K562 (cell line): ENCODE measurements at regions of chr9 and their contacts with region 1.

Region 1: GRCh38 chr9:69745716-69746437 is 13.9 kb downstream of the PTAR1 start:
- DNase-seq: peak in 2 of 4 experiments; percentile 9
- ATAC-seq: peak; percentile 76
- H3K4me3 ChIP-seq: no peak overlapping the region
- H3K27ac ChIP-seq: peak overlapping the region; percentile 45; the same call in 2 of the 3 replicates
- H3K4me1 ChIP-seq: peaks cover 0 to 7% of the 10 kb centered on the region in 2 experiments; a peak in 2 of 5 replicates
- H3K27me3 ChIP-seq: no peaks in the 10 kb centered on the region
- CTCF ChIP-seq: peak in 2 of 3 experiments; percentile 16 to 37; a peak in 3 of 6 replicates
- EP300 ChIP-seq: no peak
- POLR2A ChIP-seq: no peak
- RAD21 ChIP-seq: peak in 1 of 2 experiments; percentile 30; a peak in 1 of 4 replicates

Region 2: DNA sequence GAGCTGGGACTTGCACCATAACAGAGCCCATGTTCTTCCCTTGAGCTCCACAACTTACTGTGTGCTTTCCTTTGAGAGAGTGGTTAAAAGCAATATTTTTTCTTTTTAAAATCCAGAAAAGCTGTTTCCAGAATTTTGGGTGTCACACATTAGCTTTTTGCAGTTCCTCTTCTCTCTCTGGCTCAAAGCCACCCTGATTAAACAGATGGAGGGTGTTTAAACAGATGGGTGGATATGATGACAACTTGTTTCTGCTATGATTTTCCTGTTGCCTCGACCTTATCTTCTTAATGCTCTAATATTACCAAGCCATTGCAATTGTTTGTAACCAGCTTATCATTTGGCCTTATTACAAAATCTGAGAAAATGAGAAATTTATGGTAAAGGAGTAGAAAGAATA is 51.8 kb after region 1 on chr9:
- CTCF ChIA-PET with region 1: no interaction called
- POLR2A ChIA-PET with region 1: no interaction called
- in situ Hi-C with region 1: no loop called
- intact Hi-C with region 1: no loop called
- DNase-seq: peak in 1 of 4 experiments; percentile 10
- ATAC-seq: no peak
- H3K4me3 ChIP-seq: no peak overlapping the region
- H3K27ac ChIP-seq: no peak overlapping the region
- H3K4me1 ChIP-seq: peaks cover 0 to 3% of the 10 kb centered on the region in 2 experiments; a peak in 2 of 5 replicates
- H3K27me3 ChIP-seq: no peaks in the 10 kb centered on the region
- CTCF ChIP-seq: no peak
- EP300 ChIP-seq: no peak
- POLR2A ChIP-seq: no peak
- RAD21 ChIP-seq: no peak

Region 3: DNA sequence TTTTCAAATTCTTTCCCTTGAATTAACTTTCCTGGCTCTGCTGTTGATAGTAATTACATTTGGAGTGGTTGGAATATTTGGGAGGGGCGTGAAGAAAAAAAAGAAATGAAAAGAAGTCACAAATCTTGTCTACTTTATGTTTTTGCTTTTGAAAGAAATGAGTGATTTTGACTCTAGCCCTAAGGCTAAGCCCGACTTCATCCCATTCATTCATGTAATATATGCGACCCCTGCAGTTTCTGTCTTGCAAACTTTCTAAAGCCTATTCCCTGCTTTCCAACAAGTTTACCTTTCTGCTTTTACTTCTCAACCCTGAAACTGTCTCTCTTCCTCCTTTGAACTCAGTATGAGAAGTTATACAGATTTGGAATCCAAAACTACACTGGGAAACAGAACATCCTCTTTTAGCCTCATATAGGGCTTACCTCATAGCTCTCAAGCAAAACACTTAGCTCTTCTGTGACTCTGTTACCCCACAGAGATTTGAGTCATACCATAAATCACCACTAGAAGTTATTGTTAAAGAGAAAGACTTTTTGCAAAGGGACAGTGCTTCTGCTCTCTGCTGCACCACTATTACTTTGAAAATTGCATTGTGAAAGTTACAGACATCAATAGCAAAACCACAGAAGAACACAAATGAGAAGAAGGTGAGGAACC is 76.3 kb after region 1 on chr9:
- CTCF ChIA-PET with region 1: no interaction called
- POLR2A ChIA-PET with region 1: no interaction called
- in situ Hi-C with region 1: no loop called
- intact Hi-C with region 1: loop called (anchors 5 kb)
- DNase-seq: peak in 2 of 4 experiments; percentile 10 to 13
- ATAC-seq: peak; percentile 26; the same call in 1 of the 3 replicates
- H3K4me3 ChIP-seq: no peak overlapping the region
- H3K27ac ChIP-seq: no peak overlapping the region
- H3K4me1 ChIP-seq: no peaks in the 10 kb centered on the region; a peak in 1 of 5 replicates
- H3K27me3 ChIP-seq: no peaks in the 10 kb centered on the region
- CTCF ChIP-seq: peak; percentile 7 to 27 (median 16); a peak in 2 of 6 replicates
- EP300 ChIP-seq: no peak
- POLR2A ChIP-seq: no peak
- RAD21 ChIP-seq: peak in 1 of 2 experiments; percentile 47; a peak in 2 of 4 replicates